Activated CD8-positive, alpha-beta T cell treated with anti-CD3 and anti-CD28 coated beads for 36 hours (primary cell): ENCODE measurements at regions of chr12 and their contacts with region 1.

Region 1: DNA sequence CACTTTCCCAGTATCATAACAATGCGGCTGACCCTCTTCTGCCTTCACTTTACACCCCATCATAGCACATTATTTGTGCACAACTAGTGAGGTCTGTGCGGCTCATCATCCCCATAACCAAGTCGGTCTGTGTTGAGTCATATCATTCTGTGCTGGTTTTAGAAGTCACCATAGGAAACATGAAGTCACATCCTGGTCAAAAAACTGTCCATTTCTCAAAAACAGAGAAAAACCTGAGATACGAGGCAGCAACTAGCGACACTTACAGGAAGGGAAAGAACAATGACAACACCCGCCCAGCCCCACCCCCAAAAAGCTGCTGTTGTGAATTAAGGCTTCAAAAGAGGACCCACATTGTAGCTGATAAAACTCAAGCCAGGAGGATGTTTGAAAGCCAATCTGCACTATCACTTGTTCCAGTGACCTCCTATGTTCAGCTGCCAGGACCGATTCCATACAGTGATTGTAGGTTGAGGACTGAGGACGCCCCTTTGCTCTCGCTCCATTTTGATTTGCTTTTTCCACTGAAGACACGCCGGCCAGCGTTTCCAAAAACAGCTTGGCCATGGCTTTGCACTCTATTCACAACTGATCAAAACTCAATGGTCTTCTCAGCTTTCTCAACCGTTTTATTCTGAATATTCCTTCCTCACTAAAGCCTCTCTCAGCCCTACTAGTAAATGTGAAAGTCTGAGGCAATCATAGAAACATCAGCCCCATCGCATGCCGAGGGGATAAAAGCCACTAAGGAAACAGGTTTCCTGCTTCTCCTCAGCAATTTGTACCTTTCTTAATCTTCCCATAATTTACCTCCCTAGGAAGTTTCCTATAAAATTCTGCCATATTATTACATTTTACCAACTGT is 87.5 kb downstream of the DUSP16 start:
- DNase-seq: peak; percentile 76
- ATAC-seq: peak; percentile 88
- H3K4me3 Mint-ChIP-seq: peak overlapping the region; percentile 51
- H3K27ac Mint-ChIP-seq: peak overlapping the region; percentile 99
- H3K4me1 Mint-ChIP-seq: peaks cover 61% of the 10 kb centered on the region
- H3K27me3 Mint-ChIP-seq: no peaks in the 10 kb centered on the region
- CTCF ChIP-seq: no peak

Region 2: GRCh38 chr12:12384571-12385340 is 90.4 kb before region 1 on chr12:
- CTCF ChIA-PET with region 1: interaction called, 6 read pairs
- POLR2A ChIA-PET with region 1: interaction called, 5 read pairs
- intact Hi-C with region 1: loop called (anchors 5 kb)
- DNase-seq: peak; percentile 83
- ATAC-seq: peak; percentile 80
- H3K4me3 Mint-ChIP-seq: peak overlapping the region; percentile 36
- H3K27ac Mint-ChIP-seq: peak overlapping the region; percentile 92
- H3K4me1 Mint-ChIP-seq: peaks cover 58% of the 10 kb centered on the region
- H3K27me3 Mint-ChIP-seq: no peaks in the 10 kb centered on the region
- CTCF ChIP-seq: no peak

Region 3: GRCh38 chr12:12442548-12443071 is 32.6 kb before region 1 on chr12:
- CTCF ChIA-PET with region 1: no interaction called
- POLR2A ChIA-PET with region 1: interaction called, 15 read pairs
- intact Hi-C with region 1: loop called (anchors 5 kb)
- DNase-seq: no peak
- ATAC-seq: peak; percentile 15
- H3K4me3 Mint-ChIP-seq: peak overlapping the region; percentile 45
- H3K27ac Mint-ChIP-seq: peak overlapping the region; percentile 96
- H3K4me1 Mint-ChIP-seq: peaks cover 62% of the 10 kb centered on the region
- H3K27me3 Mint-ChIP-seq: no peaks in the 10 kb centered on the region
- CTCF ChIP-seq: no peak

Region 4: GRCh38 chr12:12521044-12521485 is 45.9 kb after region 1 on chr12:
- CTCF ChIA-PET with region 1: no interaction called
- POLR2A ChIA-PET with region 1: no interaction called
- intact Hi-C with region 1: no loop called
- DNase-seq: no peak
- ATAC-seq: no peak
- H3K4me3 Mint-ChIP-seq: no peak overlapping the region
- H3K27ac Mint-ChIP-seq: no peak overlapping the region
- H3K4me1 Mint-ChIP-seq: peaks cover 16% of the 10 kb centered on the region
- H3K27me3 Mint-ChIP-seq: no peaks in the 10 kb centered on the region
- CTCF ChIP-seq: no peak

Region 5: DNA sequence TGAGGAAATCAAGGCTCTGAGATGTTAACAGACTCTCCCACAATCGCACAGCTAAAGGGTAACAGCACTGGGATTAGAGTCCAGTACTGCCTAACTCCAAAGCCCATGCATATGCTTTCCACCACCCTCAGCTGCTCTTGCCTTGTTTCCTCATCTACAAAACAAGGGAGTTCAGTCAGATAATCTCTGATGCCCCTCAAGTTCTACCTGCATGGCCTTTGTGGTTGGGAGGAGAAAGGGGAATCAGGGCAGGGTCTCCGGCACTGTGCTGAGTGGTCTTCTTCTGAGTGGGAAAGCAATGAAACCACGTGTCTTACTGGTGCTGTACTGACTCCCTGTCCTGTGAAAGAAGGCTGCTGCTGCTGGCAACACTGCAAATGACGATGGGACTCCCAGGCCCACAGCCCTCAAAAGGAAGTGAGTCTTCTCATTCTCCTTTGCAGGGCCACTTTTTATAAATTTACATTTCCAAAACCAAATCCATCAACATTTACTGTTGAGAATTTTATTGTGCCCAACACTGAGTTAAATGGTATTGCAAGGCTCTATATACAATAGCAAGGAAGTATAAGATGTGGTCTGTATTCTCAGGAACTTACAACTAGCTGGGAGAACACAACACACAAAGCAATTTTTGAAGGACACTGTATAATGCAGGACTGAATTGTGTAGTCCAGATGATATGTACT is 107.2 kb after region 1 on chr12:
- CTCF ChIA-PET with region 1: no interaction called
- POLR2A ChIA-PET with region 1: no interaction called
- intact Hi-C with region 1: no loop called
- DNase-seq: peak; percentile 18
- ATAC-seq: peak; percentile 21
- H3K4me3 Mint-ChIP-seq: no peak overlapping the region
- H3K27ac Mint-ChIP-seq: peak overlapping the region; percentile 82
- H3K4me1 Mint-ChIP-seq: peaks cover 36% of the 10 kb centered on the region
- H3K27me3 Mint-ChIP-seq: peaks cover 1% of the 10 kb centered on the region
- CTCF ChIP-seq: no peak

Region 6: GRCh38 chr12:12954356-12954755 is 479.2 kb after region 1 on chr12:
- CTCF ChIA-PET with region 1: no interaction called
- POLR2A ChIA-PET with region 1: no interaction called
- intact Hi-C with region 1: no loop called
- DNase-seq: no peak
- ATAC-seq: no peak
- H3K4me3 Mint-ChIP-seq: no peak overlapping the region
- H3K27ac Mint-ChIP-seq: no peak overlapping the region
- H3K4me1 Mint-ChIP-seq: no peaks in the 10 kb centered on the region
- H3K27me3 Mint-ChIP-seq: peaks cover 5% of the 10 kb centered on the region
- CTCF ChIP-seq: no peak